B cell (primary cell): ENCODE measurements at regions of chr2 and their contacts with region 1.

Region 1: DNA sequence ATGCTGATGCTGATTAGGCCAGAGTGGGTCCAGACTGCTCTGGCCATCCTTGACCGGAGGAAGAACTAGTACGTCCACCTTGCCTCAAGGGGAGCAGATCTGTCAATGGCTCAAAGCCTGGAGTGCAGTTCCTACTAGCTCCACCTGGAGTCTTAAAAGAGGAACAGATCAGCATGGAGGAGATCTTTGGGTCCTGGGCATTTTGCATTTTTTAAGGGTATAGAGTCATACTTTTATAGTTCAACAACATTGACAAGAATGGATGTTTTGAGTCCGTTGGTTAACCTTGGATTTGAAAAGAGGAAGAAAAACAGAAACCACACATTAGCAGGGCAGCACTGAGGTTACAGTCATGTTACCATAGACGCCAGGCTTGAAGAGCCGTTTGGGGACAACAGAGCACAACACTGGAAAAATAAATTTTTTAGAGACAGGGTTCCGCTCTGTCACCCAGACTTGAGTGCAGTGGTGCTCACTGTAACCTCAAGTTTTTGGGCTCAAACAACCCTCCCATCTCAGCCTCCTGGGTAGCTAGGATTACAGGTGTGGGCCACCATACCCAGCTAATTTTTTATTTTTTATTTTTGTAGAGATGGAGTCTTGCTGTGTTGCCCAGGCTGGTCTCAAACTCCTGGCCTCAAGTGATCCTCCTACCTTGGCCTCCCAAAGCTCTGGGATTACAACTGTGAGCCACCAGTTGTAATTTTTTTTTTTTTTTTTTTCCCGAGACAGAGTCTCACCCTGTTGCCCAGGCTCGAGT is 78.5 kb downstream of the PRKCE start:
- DNase-seq: peak; percentile 90
- ATAC-seq: peak; percentile 60
- H3K4me3 ChIP-seq: peak overlapping the region in 1 of 5 experiments; percentile 34
- H3K4me3 Mint-ChIP-seq: peak overlapping the region; percentile 79
- H3K27ac ChIP-seq: peak overlapping the region; percentile 91 to 98
- H3K27ac Mint-ChIP-seq: peak overlapping the region; percentile 97
- H3K4me1 ChIP-seq: peaks cover 78 to 87% of the 10 kb centered on the region in 2 donors
- H3K4me1 Mint-ChIP-seq: peaks cover 83% of the 10 kb centered on the region
- H3K27me3 ChIP-seq: no peaks in the 10 kb centered on the region
- H3K27me3 Mint-ChIP-seq: no peaks in the 10 kb centered on the region
- CTCF ChIP-seq: peak; percentile 73

Region 2: GRCh38 chr2:44479122-44479887 is 1250.6 kb before region 1 on chr2:
- CTCF ChIA-PET with region 1: no interaction called
- POLR2A ChIA-PET with region 1: no interaction called
- intact Hi-C with region 1: no loop called
- DNase-seq: peak; percentile 81
- ATAC-seq: peak; percentile 100
- H3K4me3 ChIP-seq: no peak overlapping the region
- H3K4me3 Mint-ChIP-seq: no peak overlapping the region
- H3K27ac ChIP-seq: no peak overlapping the region
- H3K27ac Mint-ChIP-seq: no peak overlapping the region
- H3K4me1 ChIP-seq: no peaks in the 10 kb centered on the region
- H3K4me1 Mint-ChIP-seq: peaks cover 4% of the 10 kb centered on the region
- H3K27me3 ChIP-seq: no peaks in the 10 kb centered on the region
- H3K27me3 Mint-ChIP-seq: no peaks in the 10 kb centered on the region
- CTCF ChIP-seq: peak; percentile 100

Region 3: GRCh38 chr2:45611020-45611737 is 118.8 kb before region 1 on chr2 and contains the start of gene SRBD1:
- CTCF ChIA-PET with region 1: no interaction called
- POLR2A ChIA-PET with region 1: no interaction called
- intact Hi-C with region 1: loop called (anchors 1 kb)
- DNase-seq: peak; percentile 95
- ATAC-seq: peak; percentile 97
- H3K4me3 ChIP-seq: peak within 1 kb of the TSS; percentile 73 to 96 (median 88)
- H3K4me3 Mint-ChIP-seq: peak within 1 kb of the TSS; percentile 95
- H3K27ac ChIP-seq: peak within 1 kb of the TSS; percentile 90 to 93
- H3K27ac Mint-ChIP-seq: peak within 1 kb of the TSS; percentile 93
- H3K4me1 ChIP-seq: peaks cover 13 to 16% of the 10 kb centered on the region in 2 donors
- H3K4me1 Mint-ChIP-seq: peaks cover 26% of the 10 kb centered on the region
- H3K27me3 ChIP-seq: no peaks in the 10 kb centered on the region
- H3K27me3 Mint-ChIP-seq: no peaks in the 10 kb centered on the region
- CTCF ChIP-seq: no peak
- total RNA-seq, gene SRBD1: 27.1 and 27.6 TPM in 2 replicates

Region 4: GRCh38 chr2:45699032-45699658 is 30.8 kb before region 1 on chr2:
- CTCF ChIA-PET with region 1: interaction called, 23 read pairs
- POLR2A ChIA-PET with region 1: interaction called, 3 read pairs
- intact Hi-C with region 1: loop called (anchors 1 kb)
- DNase-seq: no peak
- ATAC-seq: peak; percentile 13
- H3K4me3 ChIP-seq: no peak overlapping the region
- H3K4me3 Mint-ChIP-seq: peak overlapping the region; percentile 75
- H3K27ac ChIP-seq: peak overlapping the region; percentile 39 to 71
- H3K27ac Mint-ChIP-seq: peak overlapping the region; percentile 87
- H3K4me1 ChIP-seq: peaks cover 60 to 66% of the 10 kb centered on the region in 2 donors
- H3K4me1 Mint-ChIP-seq: peaks cover 63% of the 10 kb centered on the region
- H3K27me3 ChIP-seq: no peaks in the 10 kb centered on the region
- H3K27me3 Mint-ChIP-seq: no peaks in the 10 kb centered on the region
- CTCF ChIP-seq: no peak

Region 5: GRCh38 chr2:45833968-45834344 is 104.0 kb after region 1 on chr2:
- CTCF ChIA-PET with region 1: interaction called, 4 read pairs
- POLR2A ChIA-PET with region 1: interaction called, 14 read pairs
- intact Hi-C with region 1: loop called (anchors 5 kb)
- DNase-seq: peak; percentile 74
- ATAC-seq: peak; percentile 72
- H3K4me3 ChIP-seq: no peak overlapping the region
- H3K4me3 Mint-ChIP-seq: peak overlapping the region; percentile 44
- H3K27ac ChIP-seq: peak overlapping the region; percentile 43 to 72
- H3K27ac Mint-ChIP-seq: peak overlapping the region; percentile 90
- H3K4me1 ChIP-seq: peaks cover 58 to 60% of the 10 kb centered on the region in 2 donors
- H3K4me1 Mint-ChIP-seq: peaks cover 64% of the 10 kb centered on the region
- H3K27me3 ChIP-seq: no peaks in the 10 kb centered on the region
- H3K27me3 Mint-ChIP-seq: no peaks in the 10 kb centered on the region
- CTCF ChIP-seq: no peak

Region 6: DNA sequence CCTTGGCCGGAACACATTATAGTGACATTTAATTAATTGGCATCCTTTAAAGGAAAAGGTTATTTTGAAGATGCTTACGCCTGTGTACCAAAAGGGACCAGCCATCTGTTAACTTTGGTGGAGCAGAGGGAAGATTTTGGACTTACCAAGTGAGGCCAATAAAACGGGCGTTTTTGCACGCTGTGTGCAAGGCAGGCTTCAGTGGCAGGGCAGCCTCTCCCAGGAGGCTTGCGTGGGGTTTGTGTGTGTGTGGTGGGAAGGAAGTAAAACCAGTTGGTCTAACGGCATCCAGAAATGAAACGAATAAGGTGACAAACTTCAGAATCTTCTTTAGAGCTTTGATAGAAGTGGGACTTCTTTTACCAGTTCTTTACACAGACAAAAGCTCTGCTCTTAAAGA is 113.2 kb after region 1 on chr2:
- CTCF ChIA-PET with region 1: interaction called, 5 read pairs
- POLR2A ChIA-PET with region 1: no interaction called
- intact Hi-C with region 1: loop called (anchors 5 kb)
- DNase-seq: peak; percentile 67
- ATAC-seq: peak; percentile 92
- H3K4me3 ChIP-seq: peak overlapping the region in 3 of 5 experiments; percentile 2 to 8 (median 5)
- H3K4me3 Mint-ChIP-seq: peak overlapping the region; percentile 61
- H3K27ac ChIP-seq: peak overlapping the region; percentile 27 to 67
- H3K27ac Mint-ChIP-seq: peak overlapping the region; percentile 11
- H3K4me1 ChIP-seq: peaks cover 53 to 68% of the 10 kb centered on the region in 2 donors
- H3K4me1 Mint-ChIP-seq: peaks cover 68% of the 10 kb centered on the region
- H3K27me3 ChIP-seq: no peaks in the 10 kb centered on the region
- H3K27me3 Mint-ChIP-seq: no peaks in the 10 kb centered on the region
- CTCF ChIP-seq: no peak